SK-N-SH (cell line): ENCODE measurements at regions of chr3 and their contacts with region 1.

Region 1: GRCh38 chr3:64023187-64023848 is at the start of gene PSMD6:
- DNase-seq: peak; percentile 92
- H3K4me3 ChIP-seq: peak within 1 kb of the TSS; percentile 99
- H3K27ac ChIP-seq: peak within 1 kb of the TSS; percentile 73 to 84
- H3K4me1 ChIP-seq: peaks cover 5 to 25% of the 10 kb centered on the region in 2 experiments; a peak in 2 of 4 replicates
- H3K27me3 ChIP-seq: no peaks in the 10 kb centered on the region
- CTCF ChIP-seq: peak; percentile 95
- EP300 ChIP-seq: peak in 1 of 2 experiments; percentile 31; a peak in 1 of 4 replicates
- RAD21 ChIP-seq: peak; percentile 47
- polyA plus RNA-seq, gene PSMD6: 75.7 and 90.3 TPM in 2 replicates

Region 2: GRCh38 chr3:64011685-64012084 is 11.6 kb before region 1 on chr3:
- CTCF ChIA-PET with region 1: interaction called, 18 read pairs
- POLR2A ChIA-PET with region 1: interaction called, 5 read pairs
- DNase-seq: no peak
- H3K4me3 ChIP-seq: no peak overlapping the region
- H3K27ac ChIP-seq: peak overlapping the region in 1 of 2 experiments; percentile 23; a peak in 1 of 4 replicates
- H3K4me1 ChIP-seq: no peaks in the 10 kb centered on the region
- H3K27me3 ChIP-seq: no peaks in the 10 kb centered on the region
- CTCF ChIP-seq: no peak
- EP300 ChIP-seq: no peak
- RAD21 ChIP-seq: no peak

Region 3: GRCh38 chr3:64224826-64225610 is 201.7 kb after region 1 on chr3 and contains the start of gene PRICKLE2:
- CTCF ChIA-PET with region 1: interaction called, 10 read pairs
- POLR2A ChIA-PET with region 1: no interaction called
- DNase-seq: no peak
- H3K4me3 ChIP-seq: peak within 1 kb of the TSS; percentile 35 to 37
- H3K27ac ChIP-seq: peak within 1 kb of the TSS; percentile 47 to 61
- H3K4me1 ChIP-seq: peaks cover 16 to 23% of the 10 kb centered on the region in 2 experiments; a peak in 3 of 4 replicates
- H3K27me3 ChIP-seq: no peaks in the 10 kb centered on the region
- CTCF ChIP-seq: peak; percentile 33
- EP300 ChIP-seq: no peak
- RAD21 ChIP-seq: no peak
- polyA plus RNA-seq, gene PRICKLE2: 0.67 and 1.1 TPM in 2 replicates

Region 4: GRCh38 chr3:64399205-64399800 is 376.0 kb after region 1 on chr3:
- CTCF ChIA-PET with region 1: interaction called, 54 read pairs
- POLR2A ChIA-PET with region 1: no interaction called
- DNase-seq: peak; percentile 58
- H3K4me3 ChIP-seq: peak overlapping the region in 1 of 2 experiments; percentile 27; a peak in 1 of 4 replicates
- H3K27ac ChIP-seq: no peak overlapping the region
- H3K4me1 ChIP-seq: peaks cover 0 to 8% of the 10 kb centered on the region in 2 experiments; a peak in 3 of 4 replicates
- H3K27me3 ChIP-seq: no peaks in the 10 kb centered on the region
- CTCF ChIP-seq: peak; percentile 85
- EP300 ChIP-seq: no peak
- RAD21 ChIP-seq: peak; percentile 90

Region 5: DNA sequence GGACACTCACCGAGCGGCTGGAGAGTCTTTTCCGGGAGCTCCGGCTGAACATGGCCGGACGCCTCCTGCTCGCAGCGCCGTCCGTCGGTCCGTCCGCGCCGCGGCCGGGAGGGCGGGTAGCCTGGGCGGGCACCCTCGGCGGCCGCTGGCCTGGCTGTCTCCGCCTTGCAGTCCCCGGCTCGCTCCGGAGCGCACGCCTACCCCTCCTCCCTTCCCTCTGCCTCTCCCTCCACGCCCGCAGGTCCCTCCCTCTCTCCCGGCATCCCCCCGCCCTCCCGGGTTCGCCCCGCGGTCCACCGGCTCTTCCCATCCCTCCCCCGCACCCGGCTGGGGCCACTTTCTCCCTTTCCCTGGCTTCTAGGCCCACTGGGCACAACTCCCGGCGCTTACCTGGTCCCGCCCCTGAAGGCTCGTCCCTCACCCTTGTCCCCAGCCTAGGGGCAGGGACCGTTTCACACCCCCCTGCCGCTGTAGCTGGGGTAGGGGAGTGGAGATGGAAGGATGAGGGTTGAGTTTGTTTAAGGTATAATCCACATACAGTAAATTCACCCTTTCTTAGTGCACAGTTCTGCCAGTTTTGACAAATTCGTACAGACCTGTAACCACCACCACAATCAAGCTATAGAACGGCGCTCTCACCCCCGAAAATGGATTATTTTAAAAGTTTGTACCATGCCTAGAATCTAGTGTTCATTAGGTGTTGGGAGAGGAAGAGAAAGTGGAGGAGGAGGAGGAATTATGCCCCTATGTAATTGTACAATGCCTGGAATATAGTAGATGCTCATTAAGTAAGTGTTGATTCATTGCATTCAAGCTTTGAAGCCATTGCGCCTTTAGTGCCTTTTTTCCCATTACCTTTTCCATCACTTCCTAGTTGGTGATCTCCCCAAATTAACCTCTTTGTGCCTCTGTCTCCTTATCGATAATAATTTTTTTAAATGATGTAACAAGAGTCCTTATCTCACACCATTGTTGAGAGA is 422.3 kb after region 1 on chr3:
- CTCF ChIA-PET with region 1: interaction called, 12 read pairs
- POLR2A ChIA-PET with region 1: interaction called, 3 read pairs
- DNase-seq: peak; percentile 83
- H3K4me3 ChIP-seq: peak overlapping the region; percentile 73 to 78
- H3K27ac ChIP-seq: no peak overlapping the region; a peak in 1 of 4 replicates
- H3K4me1 ChIP-seq: peaks cover 0 to 27% of the 10 kb centered on the region in 2 experiments; a peak in 2 of 4 replicates
- H3K27me3 ChIP-seq: no peaks in the 10 kb centered on the region
- CTCF ChIP-seq: no peak
- EP300 ChIP-seq: no peak
- RAD21 ChIP-seq: no peak

Region 6: GRCh38 chr3:64484289-64484992 is 461.1 kb after region 1 on chr3:
- CTCF ChIA-PET with region 1: interaction called, 53 read pairs
- POLR2A ChIA-PET with region 1: no interaction called
- DNase-seq: peak; percentile 76
- H3K4me3 ChIP-seq: no peak overlapping the region; a peak in 1 of 4 replicates
- H3K27ac ChIP-seq: no peak overlapping the region
- H3K4me1 ChIP-seq: peaks cover 0 to 3% of the 10 kb centered on the region in 2 experiments; a peak in 1 of 4 replicates
- H3K27me3 ChIP-seq: no peaks in the 10 kb centered on the region
- CTCF ChIP-seq: peak; percentile 91
- EP300 ChIP-seq: no peak
- RAD21 ChIP-seq: peak; percentile 100